AG04449 (cell line): ENCODE measurements at regions of chr5 and their contacts with region 1.

Region 1: GRCh38 chr5:1641560-1642166 is 117.9 kb upstream of the LPCAT1 start:
- DNase-seq: peak; percentile 50
- H3K4me3 ChIP-seq: no peak overlapping the region
- CTCF ChIP-seq: peak; percentile 93

Region 2: GRCh38 chr5:932628-933250 is 708.9 kb before region 1 on chr5:
- CTCF ChIA-PET with region 1: interaction called, 23 read pairs
- POLR2A ChIA-PET with region 1: no interaction called
- DNase-seq: no peak
- H3K4me3 ChIP-seq: no peak overlapping the region
- CTCF ChIP-seq: no peak

Region 3: DNA sequence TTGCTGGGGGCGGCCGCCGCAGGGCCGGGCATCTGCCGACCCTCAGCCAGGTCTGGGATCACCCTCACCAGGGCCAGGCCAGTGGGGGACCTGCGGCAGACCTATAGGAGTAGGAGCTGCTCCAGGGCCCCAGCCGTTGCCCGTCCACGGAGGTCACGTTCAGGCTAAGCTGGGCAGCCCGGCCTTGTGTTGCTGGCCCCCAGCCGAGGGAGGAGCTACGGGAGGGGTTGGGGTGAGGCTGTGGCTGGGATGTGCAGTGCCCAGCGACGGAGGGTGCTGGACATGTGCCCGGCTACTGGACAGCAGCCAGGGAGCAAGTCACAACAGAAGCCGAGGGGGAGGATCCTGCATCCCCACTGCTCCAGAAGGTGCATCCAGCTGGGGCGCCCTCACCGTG is 479.8 kb before region 1 on chr5:
- CTCF ChIA-PET with region 1: interaction called, 67 read pairs
- POLR2A ChIA-PET with region 1: no interaction called
- DNase-seq: no peak
- H3K4me3 ChIP-seq: no peak overlapping the region
- CTCF ChIP-seq: no peak

Region 4: GRCh38 chr5:1167728-1168709 is 473.6 kb before region 1 on chr5:
- CTCF ChIA-PET with region 1: interaction called, 67 read pairs
- POLR2A ChIA-PET with region 1: no interaction called
- DNase-seq: no peak
- H3K4me3 ChIP-seq: peak overlapping the region; percentile 12
- CTCF ChIP-seq: peak; percentile 80

Region 5: DNA sequence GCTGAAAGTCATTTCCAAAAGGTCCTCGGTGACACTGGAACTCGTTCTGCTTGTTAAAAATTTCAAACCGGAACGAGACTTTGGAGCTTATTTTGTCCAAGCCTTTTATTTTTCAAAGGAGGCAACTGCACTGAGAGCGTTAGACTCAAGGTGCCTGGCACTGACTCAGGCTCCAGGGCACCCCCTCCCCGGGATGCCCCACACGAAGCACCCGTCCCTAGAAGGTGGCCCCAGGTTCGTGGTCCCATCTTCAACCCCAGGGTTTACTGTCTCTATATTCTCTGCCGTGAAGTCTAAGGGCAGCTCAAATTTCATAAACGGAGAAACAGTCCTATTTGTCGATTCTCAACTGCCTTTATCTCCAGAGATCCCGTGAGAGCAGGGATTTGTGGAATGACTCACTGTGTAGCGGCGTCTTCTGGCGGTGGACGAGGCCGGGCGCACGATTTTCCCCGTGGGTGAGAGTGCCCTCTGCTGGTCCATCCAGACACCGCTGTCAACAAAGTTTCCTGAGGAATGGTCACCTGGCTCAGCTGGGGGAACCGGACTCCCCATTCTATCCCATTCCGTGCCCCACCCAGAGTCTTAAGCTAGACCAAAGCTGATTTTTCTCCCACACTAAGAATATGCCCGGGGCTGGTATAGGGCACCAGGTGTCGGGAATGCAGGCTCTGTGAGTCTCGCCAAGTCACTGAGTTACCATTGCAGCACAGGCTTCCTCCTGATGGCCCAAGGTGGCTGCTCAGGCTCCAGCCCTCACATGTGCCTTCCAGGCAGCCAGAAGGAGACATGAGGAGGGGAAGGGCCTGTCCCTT is 467.3 kb before region 1 on chr5:
- CTCF ChIA-PET with region 1: interaction called, 67 read pairs
- POLR2A ChIA-PET with region 1: no interaction called
- DNase-seq: no peak
- H3K4me3 ChIP-seq: no peak overlapping the region
- CTCF ChIP-seq: peak; percentile 64

Region 6: GRCh38 chr5:1208743-1209506 is 432.7 kb before region 1 on chr5:
- CTCF ChIA-PET with region 1: interaction called, 17 read pairs
- POLR2A ChIA-PET with region 1: interaction called, 3 read pairs
- DNase-seq: no peak
- H3K4me3 ChIP-seq: no peak overlapping the region
- CTCF ChIP-seq: peak; percentile 54

Region 7: DNA sequence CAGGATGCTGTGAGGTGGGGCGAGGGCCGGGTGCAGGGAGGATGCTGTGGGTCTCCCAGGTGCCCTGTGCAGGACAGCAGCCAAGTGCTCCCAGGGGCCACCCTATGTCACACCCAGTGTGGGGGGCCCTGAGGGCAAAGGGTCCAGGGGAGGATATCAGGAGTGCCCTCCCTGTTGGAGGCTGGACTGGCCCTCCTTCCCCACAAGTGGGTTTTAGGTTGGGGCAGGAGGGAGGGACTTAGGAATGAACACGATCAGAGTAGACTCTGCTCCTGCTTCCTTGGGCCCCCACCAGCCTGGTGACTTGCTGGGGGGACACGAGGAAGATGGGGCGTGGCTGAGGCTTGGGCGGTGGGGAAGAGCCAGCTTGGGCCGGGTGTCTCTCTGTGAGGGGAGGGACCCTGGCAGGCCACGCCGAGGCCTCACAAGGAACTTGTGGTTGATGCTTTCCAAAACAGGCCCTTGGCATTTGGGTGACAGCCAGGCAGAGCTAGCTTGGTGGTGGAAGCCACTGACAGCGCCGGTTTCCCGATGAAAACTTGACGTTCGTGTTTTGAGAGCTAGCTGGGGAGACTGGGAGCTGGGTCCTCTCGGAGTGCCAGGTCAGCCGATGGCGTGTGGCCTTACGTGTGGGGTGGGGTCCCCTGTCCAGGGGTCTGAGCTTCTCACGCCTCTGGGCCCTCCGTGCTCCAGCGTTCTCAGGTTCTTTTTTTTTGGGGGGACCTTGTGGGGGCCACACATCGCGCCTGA is 11.1 kb after region 1 on chr5:
- CTCF ChIA-PET with region 1: interaction called, 30 read pairs
- POLR2A ChIA-PET with region 1: no interaction called
- DNase-seq: no peak
- H3K4me3 ChIP-seq: no peak overlapping the region
- CTCF ChIP-seq: no peak

Region 8: DNA sequence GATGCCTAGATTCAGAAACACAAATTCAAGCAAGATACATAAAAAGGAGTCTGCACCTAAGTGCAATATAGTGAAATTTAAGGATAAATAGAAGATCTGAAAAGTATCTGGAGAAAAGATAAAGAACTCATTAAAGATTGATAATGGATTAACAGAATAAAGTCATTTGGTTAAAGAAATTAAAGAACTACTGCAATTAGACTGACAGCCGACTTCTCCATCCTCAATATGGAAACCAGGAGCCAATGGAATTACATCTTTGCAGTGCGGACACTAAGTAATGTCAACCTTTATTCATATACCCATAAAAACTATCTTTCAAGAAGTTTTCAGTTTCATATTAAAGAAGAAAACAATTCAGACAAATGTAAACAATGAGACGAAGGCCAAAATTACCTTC is 77.0 kb after region 1 on chr5:
- CTCF ChIA-PET with region 1: no interaction called
- POLR2A ChIA-PET with region 1: no interaction called
- DNase-seq: no peak
- H3K4me3 ChIP-seq: no peak overlapping the region
- CTCF ChIP-seq: no peak